Pancreas (tissue), 10 donors: ENCODE measurements at regions of chr11 and their contacts with region 1.

Region 1: DNA sequence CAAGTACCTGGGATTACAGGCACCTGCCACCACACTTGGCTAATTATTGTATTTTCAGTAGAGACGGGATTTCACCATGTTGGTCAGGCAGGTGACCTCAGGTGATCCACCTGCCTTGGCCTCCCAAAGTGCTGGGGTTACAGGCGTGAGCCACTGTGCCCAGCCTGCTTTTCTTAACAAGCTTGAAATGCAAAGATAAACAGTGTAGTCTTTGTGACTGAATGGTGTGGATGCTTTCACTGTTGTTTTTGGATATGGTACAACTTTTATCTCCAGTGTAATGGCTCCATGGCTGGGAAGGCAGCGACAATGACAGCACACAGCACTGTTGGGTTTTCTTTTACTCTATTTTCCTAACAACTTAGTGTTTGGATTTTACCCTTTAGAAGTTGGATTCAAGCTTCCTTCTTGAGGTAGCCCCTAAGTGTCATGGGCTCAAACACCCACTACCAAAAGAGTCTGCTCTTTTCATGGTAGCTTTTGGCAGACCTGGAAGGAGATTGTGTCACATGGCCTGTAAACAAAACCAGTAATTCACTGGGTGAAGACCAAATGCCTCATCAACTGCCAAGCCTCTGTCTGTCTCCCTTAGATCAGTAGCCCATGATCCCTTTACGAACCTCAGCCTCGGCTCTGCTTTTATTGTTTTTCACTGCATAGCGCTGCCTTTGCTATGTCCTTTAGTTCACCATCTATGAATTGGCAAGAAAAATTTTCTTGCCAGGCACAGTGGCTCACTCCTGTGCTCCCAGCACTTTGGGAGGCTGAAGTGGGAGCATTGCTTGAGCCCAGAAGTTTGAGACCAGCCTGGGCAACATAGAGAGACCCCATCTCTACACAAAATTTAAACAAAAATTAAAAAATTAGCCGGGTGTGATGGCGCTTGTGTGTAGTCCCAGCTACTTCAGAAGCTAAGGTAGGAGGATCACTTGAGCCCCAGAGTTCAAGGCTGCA is 6.4 kb downstream of the VPS51 start:
- DNase-seq: peak in 1 of 6 donors; percentile 53
- ATAC-seq: peak; percentile 67 to 78 (median 72)
- H3K4me3 ChIP-seq: no peak overlapping the region
- H3K27ac ChIP-seq: peak overlapping the region in 2 of 4 donors; percentile 28 to 74
- H3K4me1 ChIP-seq: peaks cover 41 to 47% (median 45%) of the 10 kb centered on the region in 3 donors
- H3K27me3 ChIP-seq: no peaks in the 10 kb centered on the region
- CTCF ChIP-seq: no peak

Region 2: GRCh38 chr11:64854534-64855429 is 247.6 kb before region 1 on chr11:
- intact Hi-C with region 1: loop called in 1 of 3 experiments (anchors 10 kb)
- DNase-seq: peak in 5 of 6 donors; percentile 52 to 76 (median 70)
- ATAC-seq: peak; percentile 81 to 88 (median 84)
- H3K4me3 ChIP-seq: no peak overlapping the region
- H3K27ac ChIP-seq: peak overlapping the region; percentile 33 to 62 (median 46)
- H3K4me1 ChIP-seq: peaks cover 0 to 18% (median 0%) of the 10 kb centered on the region in 3 donors
- H3K27me3 ChIP-seq: no peaks in the 10 kb centered on the region
- CTCF ChIP-seq: no peak

Region 3: GRCh38 chr11:65040847-65041621 is 61.4 kb before region 1 on chr11 and contains the start of gene SAC3D1:
- intact Hi-C with region 1: no loop called
- DNase-seq: peak; percentile 85 to 95 (median 88)
- ATAC-seq: peak; percentile 94 to 97 (median 95)
- H3K4me3 ChIP-seq: peak within 1 kb of the TSS; percentile 55 to 88 (median 82)
- H3K27ac ChIP-seq: peak within 1 kb of the TSS; percentile 83 to 91 (median 88)
- H3K4me1 ChIP-seq: peaks cover 0 to 22% (median 0%) of the 10 kb centered on the region in 3 donors
- H3K27me3 ChIP-seq: no peaks in the 10 kb centered on the region
- CTCF ChIP-seq: no peak
- total RNA-seq, gene SAC3D1: 3.5 to 5.5 (median 4.4) TPM

Region 4: DNA sequence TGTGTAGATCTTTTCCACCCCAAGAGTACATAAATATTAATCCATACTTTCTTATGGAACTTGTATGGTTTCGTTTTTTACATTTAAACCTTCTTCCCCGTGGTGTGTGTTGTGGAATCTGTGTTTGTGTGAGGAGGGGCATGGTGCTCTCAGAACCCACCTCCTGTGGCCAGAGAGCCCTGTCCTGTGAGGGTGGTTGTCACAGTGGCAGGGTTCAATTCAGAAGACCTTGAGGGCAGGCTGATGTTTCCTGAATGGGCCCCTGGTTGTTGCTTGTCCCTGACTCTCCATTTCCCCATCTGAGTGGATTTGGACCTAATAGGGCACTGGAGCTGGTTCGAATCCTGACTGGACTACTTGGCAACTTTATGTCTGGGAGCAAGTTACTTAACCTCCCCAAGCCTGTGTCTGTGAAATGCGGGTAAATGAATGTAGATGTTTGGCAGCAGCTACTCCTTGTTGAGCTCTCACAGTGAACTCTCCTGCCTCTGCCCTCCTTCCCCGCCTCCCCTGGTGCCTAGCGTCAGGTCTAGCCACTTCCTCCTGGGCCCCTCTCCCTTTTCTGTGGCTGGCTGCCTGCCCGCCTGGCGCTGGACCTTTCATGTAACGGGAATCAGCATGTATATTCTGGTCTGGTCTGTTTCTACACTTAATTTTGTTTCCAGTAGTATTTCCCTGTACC is 327.4 kb after region 1 on chr11:
- intact Hi-C with region 1: no loop called
- DNase-seq: peak; percentile 76 to 88 (median 80)
- ATAC-seq: peak; percentile 1 to 27 (median 3)
- H3K4me3 ChIP-seq: peak overlapping the region in 2 of 4 donors; percentile 6 to 12
- H3K27ac ChIP-seq: peak overlapping the region in 3 of 4 donors; percentile 36 to 99 (median 66)
- H3K4me1 ChIP-seq: peaks cover 16 to 68% (median 20%) of the 10 kb centered on the region in 3 donors
- H3K27me3 ChIP-seq: no peaks in the 10 kb centered on the region
- CTCF ChIP-seq: no peak